ENCODE measurements at regions of chr10 and their contacts with region 1.

Region 1: DNA sequence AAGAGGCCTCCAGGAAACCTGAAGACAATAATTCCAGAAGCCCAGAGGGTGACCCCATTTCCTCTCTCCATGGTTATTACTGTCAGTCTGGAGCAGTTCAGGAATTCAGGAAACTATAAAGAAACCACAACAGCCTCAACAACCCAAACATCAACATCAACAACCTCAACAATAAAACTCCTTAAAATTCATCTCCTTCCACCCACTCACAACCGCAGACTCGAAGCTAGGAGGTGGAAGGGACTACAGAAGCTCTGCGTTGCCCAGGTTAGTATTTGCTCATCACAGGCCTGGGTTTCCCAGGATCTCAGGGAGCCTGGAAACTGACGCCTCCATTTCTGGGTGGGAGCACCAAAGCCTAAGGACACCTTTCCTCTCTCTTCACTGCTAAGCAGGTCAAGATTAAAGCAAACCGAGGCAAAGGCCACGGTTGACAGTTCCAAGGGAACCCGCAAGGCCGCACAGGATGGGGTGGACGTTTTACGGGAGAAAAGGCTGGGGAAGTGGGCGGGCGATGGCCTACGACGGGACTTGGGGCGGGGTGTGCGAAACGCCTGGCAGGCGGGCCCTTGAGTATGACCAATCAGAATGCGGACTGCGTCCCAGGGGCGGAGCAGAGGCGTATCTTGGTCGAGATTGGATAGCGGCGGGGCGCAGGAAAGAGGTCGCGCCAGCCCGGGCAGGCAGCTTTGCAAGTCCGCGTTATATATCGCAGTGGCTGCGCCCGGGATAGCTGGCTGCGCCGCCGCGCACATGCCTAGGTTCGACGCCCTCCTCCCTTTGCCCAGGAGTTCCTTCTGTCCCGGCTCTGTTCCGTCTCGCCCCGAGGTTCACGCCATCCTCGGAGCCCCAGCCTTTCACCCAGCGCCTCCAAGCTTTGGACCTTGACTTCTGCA is at the start of gene ELOVL3:
- DNase-seq: peak; percentile 97
- ATAC-seq: peak; percentile 95
- H3K4me3 ChIP-seq: no peak within 1 kb of the TSS
- H3K27ac ChIP-seq: no peak within 1 kb of the TSS
- H3K4me1 ChIP-seq: no peaks in the 10 kb centered on the region
- H3K27me3 ChIP-seq: no peaks in the 10 kb centered on the region
- total RNA-seq, gene ELOVL3: not detected

Region 2: GRCh38 chr10:102167861-102168260 is 58.0 kb before region 1 on chr10:
- intact Hi-C with region 1: loop called in 1 of 2 experiments (anchors 5 kb)
- DNase-seq: no peak
- ATAC-seq: no peak
- H3K4me3 ChIP-seq: no peak overlapping the region
- H3K27ac ChIP-seq: no peak overlapping the region
- H3K4me1 ChIP-seq: no peaks in the 10 kb centered on the region
- H3K27me3 ChIP-seq: no peaks in the 10 kb centered on the region

Region 3: DNA sequence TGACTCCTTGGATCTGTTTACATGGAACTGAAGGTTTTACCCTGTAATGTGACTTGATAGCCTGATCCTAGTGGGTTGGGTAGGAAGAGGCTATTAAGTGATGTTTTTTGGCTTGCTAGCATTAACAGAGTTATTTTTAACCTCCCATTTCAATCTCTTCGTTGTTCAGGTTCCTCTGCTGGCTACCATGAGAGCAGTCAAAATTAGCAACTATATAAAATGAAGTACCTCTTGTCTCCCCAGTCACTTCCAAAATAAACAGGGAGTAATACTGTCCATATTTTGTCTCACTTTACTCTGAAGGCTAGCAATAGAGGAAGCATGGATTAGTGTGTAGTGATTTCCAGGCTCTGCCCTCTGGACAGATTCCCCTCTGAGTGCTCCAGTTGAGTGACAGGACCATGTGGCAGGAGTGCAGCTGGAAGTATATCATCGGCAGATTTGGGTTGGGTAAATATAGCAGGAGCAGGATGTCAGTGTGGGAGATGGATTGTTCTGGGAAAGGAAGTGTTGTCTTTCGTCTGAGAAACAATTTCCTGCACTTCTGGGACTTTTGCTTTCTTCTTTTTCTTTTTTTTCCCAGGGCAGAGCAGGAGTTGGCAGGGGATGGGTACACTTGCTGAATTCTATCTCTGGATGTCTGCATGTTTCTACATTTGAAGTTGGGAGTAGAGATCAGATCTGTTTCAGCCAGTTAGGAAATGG is 54.7 kb after region 1 on chr10:
- intact Hi-C with region 1: no loop called
- DNase-seq: no peak
- ATAC-seq: peak; percentile 63
- H3K4me3 ChIP-seq: no peak overlapping the region
- H3K27ac ChIP-seq: peak overlapping the region in 1 of 2 donors; percentile 18
- H3K4me1 ChIP-seq: peaks cover 4 to 13% of the 10 kb centered on the region in 2 donors
- H3K27me3 ChIP-seq: no peaks in the 10 kb centered on the region

Region 4: GRCh38 chr10:102352066-102352715 is 126.3 kb after region 1 on chr10:
- intact Hi-C with region 1: loop called (anchors 1 to 2 kb)
- DNase-seq: peak; percentile 60 to 80
- ATAC-seq: peak; percentile 76
- H3K4me3 ChIP-seq: no peak overlapping the region
- H3K27ac ChIP-seq: no peak overlapping the region
- H3K4me1 ChIP-seq: no peaks in the 10 kb centered on the region
- H3K27me3 ChIP-seq: no peaks in the 10 kb centered on the region

Region 5: DNA sequence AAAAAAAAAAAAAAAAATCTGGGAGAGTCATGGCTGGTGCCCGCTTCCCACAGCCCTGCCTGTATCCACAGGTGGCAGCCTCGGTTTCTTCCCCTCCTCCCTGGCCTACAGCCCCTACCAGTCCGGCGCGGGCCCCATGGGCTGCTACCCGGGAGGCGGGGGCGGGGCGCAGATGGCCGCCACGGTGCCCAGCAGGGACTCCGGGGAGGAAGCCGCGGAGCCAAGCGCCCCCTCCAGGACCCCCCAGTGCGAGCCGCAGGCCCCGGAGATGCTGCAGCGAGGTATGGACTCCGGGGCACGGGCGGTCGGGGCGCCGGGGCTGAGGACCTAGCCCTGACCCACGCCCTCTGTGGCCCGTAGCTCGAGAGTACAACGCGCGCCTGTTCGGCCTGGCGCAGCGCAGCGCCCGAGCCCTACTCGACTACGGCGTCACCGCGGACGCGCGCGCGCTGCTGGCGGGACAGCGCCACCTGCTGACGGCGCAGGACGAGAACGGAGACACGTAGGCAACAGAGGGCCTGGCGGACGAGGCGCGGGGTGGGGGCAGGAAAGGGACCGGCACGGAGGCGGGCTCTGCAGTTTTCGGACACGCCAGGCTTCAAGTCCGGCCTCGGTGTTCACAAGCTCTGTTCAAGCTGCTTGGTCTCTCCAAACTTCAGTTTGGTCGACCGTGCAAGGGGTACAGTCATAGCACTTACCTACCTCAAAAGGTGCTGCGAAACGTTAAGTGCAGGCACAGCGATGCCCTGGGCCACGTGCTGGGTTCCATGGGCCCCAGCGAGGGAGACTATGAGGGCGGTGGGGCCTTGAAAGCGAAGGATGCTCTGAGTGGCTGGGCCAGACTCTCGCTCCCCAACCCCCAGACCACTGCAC is 173.6 kb after region 1 on chr10:
- intact Hi-C with region 1: loop called (anchors 2 to 5 kb)
- DNase-seq: peak; percentile 93 to 97
- ATAC-seq: peak; percentile 88
- H3K4me3 ChIP-seq: peak overlapping the region in 1 of 2 donors; percentile 39
- H3K27ac ChIP-seq: no peak overlapping the region
- H3K4me1 ChIP-seq: no peaks in the 10 kb centered on the region
- H3K27me3 ChIP-seq: no peaks in the 10 kb centered on the region

Measured in aorta (tissue), 5 donors.